ENCODE measurements at regions of chr12 and their contacts with region 1.

Region 1: GRCh38 chr12:5988659-5989116 is 43.6 kb upstream of the ANO2 start:
- DNase-seq: peak; percentile 94
- H3K4me3 ChIP-seq: no peak overlapping the region
- H3K27ac ChIP-seq: no peak overlapping the region
- H3K4me1 ChIP-seq: peaks cover 0 to 4% (median 0%) of the 10 kb centered on the region in 6 donors
- H3K27me3 ChIP-seq: peaks cover 0 to 8% (median 0%) of the 10 kb centered on the region in 7 donors
- CTCF ChIP-seq: peak; percentile 66 to 95 (median 89)
- POLR2A ChIP-seq: no peak

Region 2: GRCh38 chr12:6039894-6040568 is 51.3 kb after region 1 on chr12:
- intact Hi-C with region 1: loop called (anchors 5 kb)
- DNase-seq: no peak
- H3K4me3 ChIP-seq: peak overlapping the region in 1 of 8 donors; percentile 24
- H3K27ac ChIP-seq: no peak overlapping the region
- H3K4me1 ChIP-seq: peaks cover 0 to 7% (median 2%) of the 10 kb centered on the region in 6 donors
- H3K27me3 ChIP-seq: peaks cover 0 to 4% (median 0%) of the 10 kb centered on the region in 7 donors
- CTCF ChIP-seq: peak; percentile 49 to 79 (median 74)
- POLR2A ChIP-seq: no peak

Region 3: DNA sequence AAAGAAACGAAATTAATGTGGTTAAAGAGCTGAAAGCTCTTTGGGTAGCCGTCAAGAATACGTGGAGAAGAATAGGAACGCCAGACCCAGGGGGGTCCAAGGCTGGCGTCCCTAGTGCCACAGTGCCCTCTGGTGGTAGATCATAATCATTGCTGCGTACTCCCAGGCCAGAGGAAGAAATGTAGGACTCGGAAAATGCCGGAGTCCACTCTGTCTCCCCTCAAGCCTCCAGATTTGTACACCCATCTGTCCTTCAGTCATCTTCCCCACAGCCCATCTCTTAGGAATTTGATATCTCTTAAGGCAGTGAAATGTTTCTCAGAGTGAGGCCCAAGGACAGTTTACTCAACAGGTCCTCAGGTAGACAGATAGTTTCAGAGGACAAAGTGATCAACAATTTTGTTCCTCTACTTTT is 296.4 kb after region 1 on chr12:
- intact Hi-C with region 1: loop called (anchors 2 kb)
- DNase-seq: peak; percentile 84
- H3K4me3 ChIP-seq: no peak overlapping the region
- H3K27ac ChIP-seq: no peak overlapping the region
- H3K4me1 ChIP-seq: peaks cover 0 to 25% (median 7%) of the 10 kb centered on the region in 6 donors
- H3K27me3 ChIP-seq: peaks cover 0 to 12% (median 0%) of the 10 kb centered on the region in 7 donors
- CTCF ChIP-seq: peak; percentile 81 to 95 (median 91)
- POLR2A ChIP-seq: no peak